ENCODE measurements at regions of chr2 and their contacts with region 1.

Region 1: GRCh38 chr2:180980106-180980942 is at the start of gene UBE2E3:
- DNase-seq: no peak
- ATAC-seq: peak; percentile 94
- H3K4me3 ChIP-seq: peak within 1 kb of the TSS; percentile 96 to 97
- H3K27ac ChIP-seq: peak within 1 kb of the TSS; percentile 97
- H3K4me1 ChIP-seq: peaks cover 31% of the 10 kb centered on the region
- H3K27me3 ChIP-seq: no peaks in the 10 kb centered on the region
- CTCF ChIP-seq: peak; percentile 89
- total RNA-seq, gene UBE2E3: 91.3 TPM

Region 2: GRCh38 chr2:180056367-180057118 is 923.8 kb before region 1 on chr2:
- CTCF ChIA-PET with region 1: no interaction called
- POLR2A ChIA-PET with region 1: interaction called, 12 read pairs
- in situ Hi-C with region 1: no loop called
- intact Hi-C with region 1: no loop called
- DNase-seq: no peak
- ATAC-seq: no peak
- H3K4me3 ChIP-seq: no peak overlapping the region
- H3K27ac ChIP-seq: no peak overlapping the region
- H3K4me1 ChIP-seq: no peaks in the 10 kb centered on the region
- H3K27me3 ChIP-seq: no peaks in the 10 kb centered on the region
- CTCF ChIP-seq: no peak

Region 3: DNA sequence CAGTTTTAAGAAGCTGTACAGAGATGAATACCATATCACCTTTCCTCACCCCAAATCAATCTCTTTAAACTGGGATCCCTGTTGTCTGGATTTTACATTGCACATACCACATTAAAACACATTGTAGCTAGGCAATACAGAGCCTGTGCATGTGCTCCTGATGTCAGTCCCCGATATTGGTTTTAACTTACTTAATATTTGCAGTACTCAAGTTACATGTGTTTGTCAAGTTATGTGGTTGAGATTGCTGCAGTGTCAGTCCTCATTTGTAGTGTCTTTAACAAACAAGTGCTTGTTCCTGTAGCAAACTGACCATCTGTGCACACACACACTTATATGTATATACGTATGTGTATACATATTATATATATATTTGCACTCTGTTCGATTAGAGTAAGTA is 10.3 kb before region 1 on chr2:
- CTCF ChIA-PET with region 1: no interaction called
- POLR2A ChIA-PET with region 1: no interaction called
- in situ Hi-C with region 1: no loop called
- intact Hi-C with region 1: no loop called
- DNase-seq: no peak
- ATAC-seq: no peak
- H3K4me3 ChIP-seq: no peak overlapping the region
- H3K27ac ChIP-seq: no peak overlapping the region
- H3K4me1 ChIP-seq: no peaks in the 10 kb centered on the region
- H3K27me3 ChIP-seq: no peaks in the 10 kb centered on the region
- CTCF ChIP-seq: no peak